Dendritic cell treated with granulocyte-macrophage colony-stimulating factor and Interleukin-4, amounts not matched to agents 40 ng/mL and 50 ng/mL, for 4 days (primary cell): ENCODE measurements at regions of chr10 and their contacts with region 1.

Region 1: GRCh38 chr10:124306922-124307371 is 111.8 kb downstream of the OAT start:
- H3K4me3 Mint-ChIP-seq: no peak overlapping the region
- H3K27ac Mint-ChIP-seq: peak overlapping the region; percentile 84
- H3K4me1 Mint-ChIP-seq: peaks cover 25% of the 10 kb centered on the region
- H3K27me3 Mint-ChIP-seq: no peaks in the 10 kb centered on the region

Region 2: DNA sequence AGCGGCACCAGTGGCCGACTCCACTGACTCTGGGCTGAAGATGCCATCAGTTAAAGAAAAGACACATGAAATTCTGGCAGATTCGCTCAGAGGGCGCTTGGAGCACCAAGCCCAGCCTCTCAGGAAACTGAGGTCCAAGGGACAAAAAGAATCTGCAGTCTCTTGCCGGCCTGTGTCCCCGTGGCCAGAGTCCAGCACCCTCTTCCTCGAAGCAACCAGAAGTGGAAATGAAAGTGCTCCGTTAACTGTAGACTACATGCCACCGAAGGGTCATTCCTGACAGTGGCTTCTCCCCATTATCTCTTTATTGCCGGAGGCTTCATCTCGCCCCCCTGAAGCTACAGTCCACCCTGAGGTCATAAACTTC is 212.5 kb before region 1 on chr10:
- intact Hi-C with region 1: loop called (anchors 2 kb)
- H3K4me3 Mint-ChIP-seq: peak overlapping the region; percentile 86
- H3K27ac Mint-ChIP-seq: peak overlapping the region; percentile 65
- H3K4me1 Mint-ChIP-seq: peaks cover 55% of the 10 kb centered on the region
- H3K27me3 Mint-ChIP-seq: peaks cover 57% of the 10 kb centered on the region

Region 3: GRCh38 chr10:124289851-124290795 is 16.8 kb before region 1 on chr10:
- intact Hi-C with region 1: loop called (anchors 2 kb)
- H3K4me3 Mint-ChIP-seq: no peak overlapping the region
- H3K27ac Mint-ChIP-seq: peak overlapping the region; percentile 74
- H3K4me1 Mint-ChIP-seq: peaks cover 66% of the 10 kb centered on the region
- H3K27me3 Mint-ChIP-seq: no peaks in the 10 kb centered on the region

Region 4: DNA sequence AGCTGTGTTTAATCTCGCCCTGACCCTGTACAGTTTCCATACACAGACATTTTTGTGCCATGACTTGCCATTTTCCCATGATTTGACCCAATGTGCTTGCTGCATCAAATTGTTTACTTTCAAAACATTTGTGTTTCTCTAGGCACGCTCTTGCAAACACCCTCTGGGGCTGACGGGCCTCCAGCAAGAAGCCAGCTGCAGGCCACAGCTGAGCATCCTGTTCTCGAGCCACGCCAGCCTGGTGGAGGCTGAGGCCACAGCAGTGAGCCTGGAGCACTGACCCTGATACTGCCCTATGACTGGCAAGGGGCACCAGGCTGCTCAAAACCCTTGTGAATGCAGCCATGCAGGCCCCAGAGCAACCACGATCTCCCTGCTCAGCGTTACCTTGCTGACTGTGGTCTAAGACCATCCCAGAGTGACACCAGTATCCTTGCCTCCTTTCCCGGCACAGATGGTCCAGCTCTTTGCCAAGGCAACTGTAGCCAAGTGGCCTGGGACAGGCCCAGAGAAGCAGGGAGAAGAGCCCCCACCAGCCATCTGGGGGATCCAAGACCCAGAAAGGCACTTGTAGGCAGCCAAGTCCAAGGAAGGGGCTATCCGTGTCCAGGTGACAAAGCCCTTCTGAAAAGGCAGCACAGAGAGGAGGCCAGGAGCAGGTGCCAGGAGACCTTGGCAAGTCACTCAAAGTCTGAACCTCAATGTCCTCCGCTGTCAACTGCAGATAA is 33.2 kb after region 1 on chr10:
- intact Hi-C with region 1: no loop called
- H3K4me3 Mint-ChIP-seq: no peak overlapping the region
- H3K27ac Mint-ChIP-seq: no peak overlapping the region
- H3K4me1 Mint-ChIP-seq: peaks cover 51% of the 10 kb centered on the region
- H3K27me3 Mint-ChIP-seq: peaks cover 2% of the 10 kb centered on the region

Region 5: GRCh38 chr10:124791378-124792348 is 484.7 kb after region 1 on chr10 and contains the start of gene EEF1AKMT2:
- intact Hi-C with region 1: no loop called
- H3K4me3 Mint-ChIP-seq: peak within 1 kb of the TSS; percentile 92
- H3K27ac Mint-ChIP-seq: peak within 1 kb of the TSS; percentile 98
- H3K4me1 Mint-ChIP-seq: peaks cover 17% of the 10 kb centered on the region
- H3K27me3 Mint-ChIP-seq: peaks cover 3% of the 10 kb centered on the region